Posterior cingulate gyrus (tissue), 11 donors: ENCODE measurements at regions of chr9 and their contacts with region 1.

Region 1: DNA sequence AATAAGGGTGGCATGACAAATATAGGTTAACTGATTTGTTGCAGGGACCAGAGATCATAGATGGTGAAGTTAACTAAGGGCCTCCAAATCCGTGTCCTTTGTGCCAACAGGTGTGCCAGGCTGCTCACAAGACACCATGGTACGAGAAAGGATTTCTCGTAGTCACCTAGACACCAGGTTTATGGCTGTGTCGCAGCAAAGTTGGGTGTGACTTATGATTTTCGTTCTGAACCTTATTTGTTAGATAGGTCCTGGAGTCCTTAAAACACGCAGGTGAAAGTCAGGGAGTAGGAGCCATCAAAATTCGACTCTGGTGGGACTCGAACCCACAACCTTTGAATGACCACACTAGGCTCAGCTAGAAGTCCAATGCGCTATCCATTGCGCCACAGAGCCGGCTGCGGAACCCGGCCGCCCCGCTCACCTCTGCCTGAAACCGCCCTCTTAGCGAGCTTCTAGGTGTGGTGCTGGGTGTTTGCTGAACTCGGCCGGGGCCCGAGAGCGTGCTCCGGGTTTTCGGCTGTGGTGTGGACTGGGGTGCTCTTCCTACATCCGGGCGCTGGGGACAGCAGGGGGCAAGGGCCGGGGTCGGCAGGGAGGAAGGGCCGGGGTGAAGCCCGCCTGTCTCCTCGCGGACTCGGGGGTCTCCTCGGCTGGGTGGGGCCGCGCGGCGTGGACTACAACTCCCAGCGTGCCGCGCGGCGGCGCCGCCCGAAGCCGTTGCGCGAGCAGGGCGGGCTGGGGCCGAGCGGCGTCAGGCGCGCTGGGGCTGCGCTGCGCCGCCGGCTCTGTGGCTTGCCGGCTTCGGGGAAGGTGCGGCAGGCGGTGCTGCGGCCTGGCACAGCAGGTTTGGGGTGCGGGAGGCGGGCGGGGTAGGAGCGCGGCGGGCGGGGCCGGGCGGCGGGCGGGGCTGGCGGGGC is at the start of gene SLC27A4:
- DNase-seq: peak; percentile 45 to 96 (median 74)

Region 2: DNA sequence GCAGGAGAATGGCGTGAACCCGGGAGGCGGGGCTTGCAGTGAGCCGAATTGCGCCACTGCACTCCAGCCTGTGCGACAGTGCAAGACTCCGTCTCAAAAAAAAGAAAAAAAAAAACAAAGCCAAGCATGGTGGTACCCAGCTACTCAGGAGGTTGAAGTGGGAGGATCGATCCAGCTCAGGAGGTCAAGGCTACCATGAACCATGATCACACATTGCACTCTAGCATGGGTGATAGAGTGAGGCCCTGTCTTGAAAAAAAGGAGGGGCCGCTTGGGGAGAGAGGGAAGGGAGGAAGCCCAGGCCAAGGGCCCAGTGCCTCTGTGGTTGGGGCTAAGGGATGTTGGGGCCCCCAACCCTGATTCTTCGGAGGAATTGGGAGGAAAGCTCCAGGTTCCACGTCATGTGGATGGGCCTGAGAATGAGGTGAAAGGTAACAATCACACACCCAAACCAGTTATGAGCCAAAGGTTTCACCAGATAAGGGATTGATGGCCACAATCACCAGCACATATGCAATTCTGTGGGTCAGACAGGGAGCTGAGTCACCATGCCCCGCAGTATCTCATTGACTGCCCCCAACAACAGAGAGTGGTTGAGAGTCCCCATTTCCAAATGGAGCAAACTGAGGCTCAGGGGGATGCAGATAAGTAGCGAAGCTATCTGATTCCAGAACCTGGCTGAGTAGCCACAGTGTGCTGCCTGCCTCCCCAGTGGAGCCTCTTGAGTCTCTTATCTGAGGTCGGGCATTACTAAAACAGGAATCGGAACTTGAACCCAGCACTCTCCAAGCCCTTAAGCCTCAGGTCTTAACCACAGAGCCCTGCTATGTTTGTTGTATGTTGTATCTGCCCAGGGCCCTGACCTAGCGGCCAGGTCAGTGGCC is 43.5 kb before region 1 on chr9:
- intact Hi-C with region 1: loop called (anchors 1 kb)
- DNase-seq: no peak